Naive thymus-derived CD4-positive, alpha-beta T cell (primary cell): ENCODE measurements at regions of chr1 and their contacts with region 1.

Region 1: GRCh38 chr1:93345633-93346420 is at the start of gene DR1:
- DNase-seq: peak; percentile 82 to 96 (median 91)
- ATAC-seq: peak; percentile 91
- H3K4me3 ChIP-seq: peak within 1 kb of the TSS; percentile 93
- H3K4me3 Mint-ChIP-seq: peak within 1 kb of the TSS; percentile 92 to 100 (median 99)
- H3K27ac ChIP-seq: peak within 1 kb of the TSS; percentile 88
- H3K27ac Mint-ChIP-seq: peak within 1 kb of the TSS; percentile 89 to 99 (median 98)
- H3K4me1 ChIP-seq: peaks cover 13 to 25% of the 10 kb centered on the region in 2 donors
- H3K4me1 Mint-ChIP-seq: peaks cover 19 to 47% (median 35%) of the 10 kb centered on the region in 7 donors
- H3K27me3 ChIP-seq: no peaks in the 10 kb centered on the region
- H3K27me3 Mint-ChIP-seq: no peaks in the 10 kb centered on the region
- total RNA-seq, gene DR1: 46.2 to 104 (median 62.7) TPM

Region 2: GRCh38 chr1:92831762-92832536 is 513.9 kb before region 1 on chr1 and contains the start of gene RPL5:
- CTCF ChIA-PET with region 1: no interaction called
- POLR2A ChIA-PET with region 1: interaction called, 11 read pairs
- intact Hi-C with region 1: loop called (anchors 1 to 5 kb)
- DNase-seq: peak; percentile 94 to 99 (median 98)
- ATAC-seq: peak; percentile 95
- H3K4me3 ChIP-seq: peak within 1 kb of the TSS; percentile 94
- H3K4me3 Mint-ChIP-seq: peak within 1 kb of the TSS; percentile 94 to 100 (median 98)
- H3K27ac ChIP-seq: peak within 1 kb of the TSS; percentile 94
- H3K27ac Mint-ChIP-seq: peak within 1 kb of the TSS; percentile 98 to 100 (median 99)
- H3K4me1 ChIP-seq: peaks cover 16 to 30% of the 10 kb centered on the region in 2 donors
- H3K4me1 Mint-ChIP-seq: peaks cover 29 to 54% (median 44%) of the 10 kb centered on the region in 7 donors
- H3K27me3 ChIP-seq: no peaks in the 10 kb centered on the region
- H3K27me3 Mint-ChIP-seq: peaks cover 0 to 5% (median 0%) of the 10 kb centered on the region in 5 donors
- total RNA-seq, gene RPL5: 764 to 1,693 (median 1,596) TPM

Region 3: DNA sequence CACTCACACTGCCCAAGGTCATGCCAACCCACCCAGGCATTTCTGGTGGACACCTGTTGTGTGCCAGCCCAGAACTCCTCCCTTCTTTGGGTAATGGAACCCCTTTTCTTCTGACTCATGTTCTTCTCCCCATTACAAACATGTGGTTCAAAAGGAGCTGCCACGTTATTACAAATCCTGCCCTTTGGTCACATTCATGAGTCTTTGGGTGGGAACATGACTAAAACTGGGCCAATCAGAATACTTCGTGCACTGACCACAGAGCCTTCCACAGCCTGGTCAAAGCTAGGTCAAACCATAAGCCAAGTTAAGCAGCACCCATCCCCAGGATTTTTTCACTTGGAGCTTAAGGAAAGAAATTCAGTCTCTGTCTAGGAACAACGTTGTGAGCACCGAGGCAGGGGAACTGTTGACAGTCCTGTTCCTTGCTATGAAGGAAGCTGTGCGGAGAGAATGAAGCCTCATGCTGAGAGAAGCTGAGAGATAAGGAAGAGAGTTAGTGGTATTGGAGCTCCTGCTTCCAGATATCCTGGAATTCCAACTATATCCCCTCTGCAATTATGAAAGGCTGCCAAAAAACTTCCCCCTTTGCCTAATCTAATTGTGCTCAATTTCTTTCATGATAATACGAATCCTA is 337.8 kb before region 1 on chr1:
- CTCF ChIA-PET with region 1: no interaction called
- POLR2A ChIA-PET with region 1: no interaction called
- intact Hi-C with region 1: no loop called
- DNase-seq: no peak
- ATAC-seq: no peak
- H3K4me3 ChIP-seq: no peak overlapping the region
- H3K4me3 Mint-ChIP-seq: no peak overlapping the region
- H3K27ac ChIP-seq: no peak overlapping the region
- H3K27ac Mint-ChIP-seq: no peak overlapping the region
- H3K4me1 ChIP-seq: no peaks in the 10 kb centered on the region
- H3K4me1 Mint-ChIP-seq: peaks cover 0 to 18% (median 4%) of the 10 kb centered on the region in 7 donors
- H3K27me3 ChIP-seq: no peaks in the 10 kb centered on the region
- H3K27me3 Mint-ChIP-seq: peaks cover 0 to 27% (median 7%) of the 10 kb centered on the region in 5 donors

Region 4: GRCh38 chr1:93179886-93180722 is 165.7 kb before region 1 on chr1 and contains the start of gene TMED5:
- CTCF ChIA-PET with region 1: no interaction called
- POLR2A ChIA-PET with region 1: interaction called, 4 read pairs
- intact Hi-C with region 1: loop called (anchors 1 kb)
- DNase-seq: peak; percentile 94 to 97 (median 96)
- ATAC-seq: peak; percentile 89
- H3K4me3 ChIP-seq: peak within 1 kb of the TSS; percentile 95
- H3K4me3 Mint-ChIP-seq: peak within 1 kb of the TSS; percentile 91 to 98 (median 94)
- H3K27ac ChIP-seq: peak within 1 kb of the TSS; percentile 91
- H3K27ac Mint-ChIP-seq: peak within 1 kb of the TSS; percentile 86 to 99 (median 97)
- H3K4me1 ChIP-seq: peaks cover 24 to 30% of the 10 kb centered on the region in 2 donors
- H3K4me1 Mint-ChIP-seq: peaks cover 30 to 59% (median 47%) of the 10 kb centered on the region in 7 donors
- H3K27me3 ChIP-seq: no peaks in the 10 kb centered on the region
- H3K27me3 Mint-ChIP-seq: no peaks in the 10 kb centered on the region
- total RNA-seq, gene TMED5: 37.8 to 60.0 (median 47.4) TPM

Region 5: GRCh38 chr1:93324486-93325464 is 21.1 kb before region 1 on chr1:
- CTCF ChIA-PET with region 1: interaction called, 5 read pairs
- POLR2A ChIA-PET with region 1: interaction called, 15 read pairs
- intact Hi-C with region 1: loop called in 1 of 2 experiments (anchors 2 kb)
- DNase-seq: no peak
- ATAC-seq: no peak
- H3K4me3 ChIP-seq: no peak overlapping the region
- H3K4me3 Mint-ChIP-seq: no peak overlapping the region
- H3K27ac ChIP-seq: no peak overlapping the region
- H3K27ac Mint-ChIP-seq: no peak overlapping the region
- H3K4me1 ChIP-seq: no peaks in the 10 kb centered on the region
- H3K4me1 Mint-ChIP-seq: no peaks in the 10 kb centered on the region
- H3K27me3 ChIP-seq: no peaks in the 10 kb centered on the region
- H3K27me3 Mint-ChIP-seq: no peaks in the 10 kb centered on the region

Region 6: GRCh38 chr1:93846211-93846991 is 500.6 kb after region 1 on chr1:
- CTCF ChIA-PET with region 1: no interaction called
- POLR2A ChIA-PET with region 1: interaction called, 24 read pairs
- intact Hi-C with region 1: loop called (anchors 1 kb)
- DNase-seq: peak; percentile 78 to 91 (median 89)
- ATAC-seq: peak; percentile 71
- H3K4me3 ChIP-seq: peak overlapping the region; percentile 90
- H3K4me3 Mint-ChIP-seq: peak overlapping the region; percentile 86 to 97 (median 91)
- H3K27ac ChIP-seq: peak overlapping the region; percentile 88
- H3K27ac Mint-ChIP-seq: peak overlapping the region; percentile 86 to 100 (median 96)
- H3K4me1 ChIP-seq: peaks cover 4 to 16% of the 10 kb centered on the region in 2 donors
- H3K4me1 Mint-ChIP-seq: peaks cover 15 to 36% (median 24%) of the 10 kb centered on the region in 7 donors
- H3K27me3 ChIP-seq: no peaks in the 10 kb centered on the region
- H3K27me3 Mint-ChIP-seq: peaks cover 0 to 13% (median 0%) of the 10 kb centered on the region in 5 donors

Region 7: GRCh38 chr1:94417978-94418663 is 1072.3 kb after region 1 on chr1 and contains the start of gene ABCD3:
- CTCF ChIA-PET with region 1: no interaction called
- POLR2A ChIA-PET with region 1: no interaction called
- intact Hi-C with region 1: loop called in 1 of 2 experiments (anchors 5 kb)
- DNase-seq: peak; percentile 97 to 99 (median 99)
- ATAC-seq: peak; percentile 97
- H3K4me3 ChIP-seq: peak within 1 kb of the TSS; percentile 79
- H3K4me3 Mint-ChIP-seq: no peak within 1 kb of the TSS
- H3K27ac ChIP-seq: peak within 1 kb of the TSS; percentile 76
- H3K27ac Mint-ChIP-seq: peak within 1 kb of the TSS in 7 of 9 donors; percentile 68 to 91 (median 83)
- H3K4me1 ChIP-seq: peaks cover 10 to 15% of the 10 kb centered on the region in 2 donors
- H3K4me1 Mint-ChIP-seq: peaks cover 25 to 42% (median 40%) of the 10 kb centered on the region in 7 donors
- H3K27me3 ChIP-seq: no peaks in the 10 kb centered on the region
- H3K27me3 Mint-ChIP-seq: peaks cover 0 to 16% (median 0%) of the 10 kb centered on the region in 5 donors
- total RNA-seq, gene ABCD3: 18.0 to 31.2 (median 25.0) TPM